ENCODE measurements at regions of chr15 and their contacts with region 1.

Region 1: GRCh38 chr15:61871926-61872522 is 188.2 kb downstream of the VPS13C start:
- DNase-seq: no peak
- ATAC-seq: no peak
- H3K4me3 ChIP-seq: no peak overlapping the region
- H3K27ac ChIP-seq: no peak overlapping the region
- H3K4me1 ChIP-seq: no peaks in the 10 kb centered on the region
- H3K27me3 ChIP-seq: no peaks in the 10 kb centered on the region
- CTCF ChIP-seq: peak; percentile 20 to 70 (median 54)

Region 2: DNA sequence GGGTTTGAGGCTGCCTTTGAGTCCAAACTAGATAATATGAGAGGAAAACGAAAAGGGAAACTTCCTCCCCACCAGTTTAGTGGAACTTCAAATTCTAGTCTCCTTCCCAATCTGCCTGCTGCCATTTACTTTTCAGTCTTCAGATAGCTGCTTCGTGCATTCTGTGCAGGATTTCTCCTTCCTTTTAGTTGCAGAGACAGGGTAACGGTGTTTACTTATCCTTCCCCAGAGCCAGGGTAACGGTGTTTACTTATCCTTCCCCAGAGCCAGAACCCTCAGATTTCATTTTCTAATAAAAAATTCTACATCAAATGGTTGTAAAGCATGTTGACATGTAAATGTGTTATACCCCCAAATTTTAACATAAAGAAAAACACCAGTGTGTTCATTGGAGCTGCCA is 94.3 kb before region 1 on chr15:
- intact Hi-C with region 1: no loop called
- DNase-seq: no peak
- ATAC-seq: no peak
- H3K4me3 ChIP-seq: no peak overlapping the region
- H3K27ac ChIP-seq: no peak overlapping the region
- H3K4me1 ChIP-seq: no peaks in the 10 kb centered on the region
- H3K27me3 ChIP-seq: peaks cover 0 to 35% (median 11%) of the 10 kb centered on the region in 7 donors
- CTCF ChIP-seq: no peak

Region 3: DNA sequence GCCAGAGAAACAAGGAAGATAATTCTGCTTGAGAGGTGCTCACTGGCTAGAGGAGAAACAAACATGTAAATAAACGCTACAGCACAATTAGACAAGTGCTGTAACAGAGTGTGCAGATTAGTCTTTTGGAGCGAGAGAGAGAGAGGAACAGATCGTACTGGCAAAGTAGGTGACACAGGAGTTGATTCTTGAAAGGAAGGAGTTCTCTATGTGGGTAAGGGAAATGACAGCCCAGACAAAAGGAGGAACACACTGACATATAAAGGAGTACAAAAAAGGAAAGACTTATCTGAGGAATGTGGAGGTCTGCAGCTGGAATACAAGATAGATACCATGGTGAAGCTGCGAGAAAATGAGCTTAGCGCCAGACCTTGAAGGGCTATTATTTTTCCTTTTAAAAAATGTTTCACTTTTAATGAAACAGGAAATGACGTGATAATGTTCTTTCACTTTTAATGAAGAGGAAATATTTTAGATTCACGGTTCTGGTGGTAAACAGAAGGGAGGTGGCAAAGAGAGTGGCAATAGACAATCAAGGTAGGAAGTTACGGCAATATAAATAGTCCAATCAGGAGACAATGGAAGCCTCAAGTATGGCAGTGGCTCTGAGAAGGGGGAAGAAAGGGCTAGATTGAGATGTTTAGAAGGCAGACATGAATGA is 14.7 kb before region 1 on chr15:
- intact Hi-C with region 1: loop called in 1 of 10 experiments (anchors 1 kb)
- DNase-seq: no peak
- ATAC-seq: peak in 6 of 8 donors; percentile 28 to 71 (median 49)
- H3K4me3 ChIP-seq: peak overlapping the region in 8 of 10 donors; percentile 5 to 41 (median 30)
- H3K27ac ChIP-seq: peak overlapping the region in 8 of 10 donors; percentile 14 to 72 (median 34)
- H3K4me1 ChIP-seq: peaks cover 0 to 16% (median 5%) of the 10 kb centered on the region in 9 donors
- H3K27me3 ChIP-seq: no peaks in the 10 kb centered on the region
- CTCF ChIP-seq: no peak

Region 4: DNA sequence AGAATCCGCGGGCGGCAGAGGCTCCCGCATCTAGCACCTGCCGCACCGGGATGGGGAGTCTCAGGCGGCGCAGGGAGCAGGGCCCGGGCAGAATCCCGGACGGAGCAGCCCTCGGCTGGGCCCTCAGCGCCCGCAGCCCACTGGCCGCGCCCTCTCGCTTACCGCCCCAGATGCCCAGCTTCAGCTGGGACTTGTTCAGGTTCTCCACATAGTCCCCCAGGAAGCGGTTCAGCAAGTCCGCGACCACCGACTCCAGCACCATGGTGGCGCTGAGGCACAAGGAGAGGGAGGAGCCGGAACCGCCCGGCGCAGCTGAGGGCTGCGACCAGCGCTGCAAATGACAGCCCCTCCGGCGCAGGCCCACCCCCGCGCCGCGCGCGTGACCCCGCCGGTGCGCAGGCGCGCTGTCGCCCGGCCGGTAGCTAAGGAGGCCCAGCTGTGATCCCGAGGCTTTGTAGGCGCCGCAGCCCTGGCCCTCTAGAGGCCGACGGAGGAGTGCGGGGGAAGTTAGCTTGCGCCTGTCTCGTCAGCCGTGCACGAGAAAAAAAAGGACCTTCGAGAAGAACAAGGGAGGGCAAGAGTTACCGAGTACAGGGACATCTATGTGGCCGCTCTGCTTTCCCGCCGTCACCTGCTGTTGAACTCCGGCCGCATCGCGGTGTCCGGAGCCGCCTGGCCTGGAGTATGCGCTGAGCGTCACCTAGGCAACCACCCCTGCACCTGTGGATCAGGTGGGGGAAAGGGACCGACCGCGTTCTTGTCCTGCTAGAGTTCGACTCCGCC is 188.3 kb after region 1 on chr15 and contains the start of gene VPS13C:
- intact Hi-C with region 1: loop called in 2 of 10 experiments (anchors 10 kb)
- DNase-seq: peak; percentile 93
- ATAC-seq: peak; percentile 99 to 100 (median 99)
- H3K4me3 ChIP-seq: peak within 1 kb of the TSS; percentile 62 to 98 (median 89)
- H3K27ac ChIP-seq: peak within 1 kb of the TSS; percentile 66 to 96 (median 93)
- H3K4me1 ChIP-seq: peaks cover 0 to 38% (median 20%) of the 10 kb centered on the region in 9 donors
- H3K27me3 ChIP-seq: peaks cover 0 to 5% (median 0%) of the 10 kb centered on the region in 7 donors
- CTCF ChIP-seq: peak; percentile 58 to 88 (median 83)
- total RNA-seq, gene VPS13C: 28.5 to 59.0 (median 43.4) TPM

Region 5: GRCh38 chr15:62066663-62067447 is 194.8 kb after region 1 on chr15 and contains the start of gene C2CD4A:
- intact Hi-C with region 1: loop called in 8 of 10 experiments (anchors 5 to 10 kb)
- DNase-seq: peak; percentile 54 to 56
- ATAC-seq: peak; percentile 58 to 90 (median 76)
- H3K4me3 ChIP-seq: peak within 1 kb of the TSS in 9 of 10 donors; percentile 45 to 71 (median 57)
- H3K27ac ChIP-seq: peak within 1 kb of the TSS in 3 of 10 donors; percentile 6 to 56 (median 38)
- H3K4me1 ChIP-seq: peaks cover 2 to 35% (median 19%) of the 10 kb centered on the region in 9 donors
- H3K27me3 ChIP-seq: peaks cover 0 to 30% (median 0%) of the 10 kb centered on the region in 7 donors
- CTCF ChIP-seq: peak in 3 of 9 donors; percentile 19 to 33 (median 26)
- total RNA-seq, gene C2CD4A: 0.25 TPM in 1 of 10 donors, not detected in the others

Region 6: DNA sequence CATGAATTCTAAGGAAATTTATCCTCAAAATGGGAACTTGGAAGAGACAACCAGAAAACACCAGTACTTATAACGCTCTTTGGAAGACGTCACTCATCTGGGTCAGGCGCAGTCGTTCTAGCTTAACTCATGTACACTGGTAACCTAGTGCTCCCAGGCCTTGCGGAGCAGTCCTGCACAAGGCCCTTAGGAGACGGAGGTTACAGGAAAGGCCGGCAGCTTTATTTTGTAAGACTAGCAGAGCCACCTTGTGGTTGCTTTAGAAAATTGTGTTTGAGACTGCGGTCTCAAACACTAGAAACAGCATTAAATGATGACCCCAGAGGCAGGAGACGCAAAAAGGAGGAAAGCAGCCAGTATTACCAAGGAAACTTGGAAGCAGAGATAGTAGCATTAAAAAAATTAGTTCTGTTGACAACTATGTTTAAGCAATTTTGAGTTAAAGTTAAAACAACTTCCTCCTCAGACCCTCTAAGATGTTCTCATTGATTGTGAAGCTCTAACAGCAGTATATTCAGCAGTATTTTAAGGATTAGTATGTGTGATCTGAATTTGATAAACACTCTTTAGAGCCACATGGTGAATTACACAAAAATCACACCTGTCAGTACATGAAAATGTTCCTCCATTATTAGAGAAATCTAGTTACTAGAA is 435.0 kb after region 1 on chr15:
- intact Hi-C with region 1: loop called in 4 of 10 experiments (anchors 5 to 10 kb)
- DNase-seq: peak; percentile 27 to 58
- ATAC-seq: peak; percentile 84 to 93 (median 88)
- H3K4me3 ChIP-seq: no peak overlapping the region
- H3K27ac ChIP-seq: peak overlapping the region in 1 of 10 donors; percentile 19
- H3K4me1 ChIP-seq: peaks cover 0 to 19% (median 6%) of the 10 kb centered on the region in 9 donors
- H3K27me3 ChIP-seq: peaks cover 0 to 7% (median 0%) of the 10 kb centered on the region in 7 donors
- CTCF ChIP-seq: peak; percentile 57 to 81 (median 67)

Measured in heart right ventricle (tissue), 16 donors.